CD14-positive monocyte (primary cell): ENCODE measurements at regions of chr19 and their contacts with region 1.

Region 1: GRCh38 chr19:51296336-51297093 is 14.9 kb upstream of the IGLON5 start:
- DNase-seq: no peak
- H3K4me3 ChIP-seq: no peak overlapping the region
- H3K4me3 Mint-ChIP-seq: no peak overlapping the region
- H3K27ac ChIP-seq: no peak overlapping the region
- H3K27ac Mint-ChIP-seq: no peak overlapping the region
- H3K4me1 ChIP-seq: no peaks in the 10 kb centered on the region
- H3K4me1 Mint-ChIP-seq: no peaks in the 10 kb centered on the region
- H3K27me3 ChIP-seq: no peaks in the 10 kb centered on the region
- H3K27me3 Mint-ChIP-seq: peaks cover 10 to 30% (median 17%) of the 10 kb centered on the region in 3 donors
- CTCF ChIP-seq: no peak

Region 2: DNA sequence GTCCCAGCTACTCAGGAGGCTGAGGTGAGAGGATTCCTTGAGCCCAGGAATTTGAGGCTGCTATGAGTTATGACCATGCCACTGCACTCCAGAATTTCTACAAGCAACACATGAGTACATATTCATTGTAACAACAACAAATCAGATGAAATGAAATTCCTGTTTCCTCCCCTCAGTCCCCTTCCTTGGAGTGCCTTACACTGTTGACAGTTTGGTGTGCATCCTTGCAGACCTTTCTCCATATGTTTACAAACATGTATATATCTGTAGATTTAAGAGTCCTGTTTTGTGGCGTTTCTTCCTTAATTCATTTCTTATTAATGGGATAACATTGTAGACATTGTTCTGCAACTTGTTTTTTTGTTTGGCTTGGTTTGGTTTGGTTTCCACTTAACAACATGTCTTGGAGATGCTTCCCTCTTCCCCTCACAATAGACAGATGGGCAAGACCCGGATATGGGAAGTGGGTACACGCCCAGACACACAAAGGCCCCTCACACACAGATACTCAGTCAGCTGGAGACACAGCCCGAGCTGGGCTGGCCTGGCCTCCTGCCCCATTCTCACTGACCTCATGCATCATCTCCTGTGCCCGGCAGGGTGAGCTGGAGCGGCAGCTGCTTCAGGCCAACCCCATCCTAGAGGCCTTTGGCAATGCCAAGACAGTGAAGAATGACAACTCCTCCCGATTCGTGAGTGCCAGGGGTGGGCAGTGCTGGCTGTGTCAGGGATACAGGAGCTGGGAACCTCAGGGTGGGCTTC is 1071.3 kb before region 1 on chr19:
- intact Hi-C with region 1: loop called in 1 of 2 experiments (anchors 10 kb)
- DNase-seq: no peak
- H3K4me3 ChIP-seq: no peak overlapping the region
- H3K4me3 Mint-ChIP-seq: no peak overlapping the region
- H3K27ac ChIP-seq: no peak overlapping the region
- H3K27ac Mint-ChIP-seq: no peak overlapping the region
- H3K4me1 ChIP-seq: no peaks in the 10 kb centered on the region
- H3K4me1 Mint-ChIP-seq: no peaks in the 10 kb centered on the region
- H3K27me3 ChIP-seq: peaks cover 0 to 6% of the 10 kb centered on the region in 2 donors
- H3K27me3 Mint-ChIP-seq: peaks cover 2 to 26% (median 9%) of the 10 kb centered on the region in 3 donors
- CTCF ChIP-seq: no peak